ENCODE measurements at regions of chr5 and their contacts with region 1.

Region 1: GRCh38 chr5:170623576-170624181 is 119.9 kb downstream of the KCNIP1 start:
- DNase-seq: peak; percentile 59 to 78
- ATAC-seq: peak; percentile 63 to 93; a peak in 5 of 6 replicates
- H3K4me3 ChIP-seq: no peak overlapping the region
- H3K27ac ChIP-seq: no peak overlapping the region
- H3K4me1 ChIP-seq: no peaks in the 10 kb centered on the region
- CTCF ChIP-seq: peak; percentile 58
- EP300 ChIP-seq: no peak
- POLR2A ChIP-seq: no peak
- RAD21 ChIP-seq: peak; percentile 86 to 95

Region 2: GRCh38 chr5:170267431-170268152 is 356.1 kb before region 1 on chr5:
- CTCF ChIA-PET with region 1: interaction called, 26 read pairs
- POLR2A ChIA-PET with region 1: no interaction called
- DNase-seq: peak; percentile 76 to 79
- ATAC-seq: peak; percentile 94 to 98
- H3K4me3 ChIP-seq: no peak overlapping the region
- H3K27ac ChIP-seq: no peak overlapping the region
- H3K4me1 ChIP-seq: no peaks in the 10 kb centered on the region
- CTCF ChIP-seq: peak; percentile 85
- EP300 ChIP-seq: no peak
- POLR2A ChIP-seq: no peak
- RAD21 ChIP-seq: peak; percentile 61 to 69; a peak in 4 of 5 replicates

Region 3: DNA sequence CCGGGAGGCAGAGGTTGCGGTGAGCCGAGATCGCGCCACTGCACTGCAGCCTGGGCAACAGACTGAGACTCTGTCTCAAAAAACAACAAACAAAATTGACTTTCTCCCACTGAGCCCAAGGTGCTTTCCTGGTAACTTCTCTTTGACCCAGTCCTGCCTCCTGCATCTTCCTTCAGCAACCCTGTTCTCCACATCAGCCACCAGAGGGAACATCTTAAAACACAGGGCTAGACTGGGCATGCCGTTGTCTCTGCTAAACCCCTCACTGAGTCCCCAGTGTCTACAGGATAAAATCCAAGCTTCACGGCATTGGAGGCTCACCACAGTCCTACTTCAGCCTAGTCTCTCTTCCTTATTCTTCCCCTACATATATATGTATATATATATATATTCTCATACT is 194.7 kb before region 1 on chr5:
- CTCF ChIA-PET with region 1: interaction called, 508 read pairs
- POLR2A ChIA-PET with region 1: no interaction called
- DNase-seq: peak; percentile 41 to 50
- ATAC-seq: peak; percentile 71 to 92; a peak in 5 of 6 replicates
- H3K4me3 ChIP-seq: no peak overlapping the region
- H3K27ac ChIP-seq: no peak overlapping the region
- H3K4me1 ChIP-seq: no peaks in the 10 kb centered on the region
- CTCF ChIP-seq: no peak
- EP300 ChIP-seq: no peak
- POLR2A ChIP-seq: no peak
- RAD21 ChIP-seq: peak in 1 of 2 experiments; percentile 33; a peak in 2 of 5 replicates

Region 4: DNA sequence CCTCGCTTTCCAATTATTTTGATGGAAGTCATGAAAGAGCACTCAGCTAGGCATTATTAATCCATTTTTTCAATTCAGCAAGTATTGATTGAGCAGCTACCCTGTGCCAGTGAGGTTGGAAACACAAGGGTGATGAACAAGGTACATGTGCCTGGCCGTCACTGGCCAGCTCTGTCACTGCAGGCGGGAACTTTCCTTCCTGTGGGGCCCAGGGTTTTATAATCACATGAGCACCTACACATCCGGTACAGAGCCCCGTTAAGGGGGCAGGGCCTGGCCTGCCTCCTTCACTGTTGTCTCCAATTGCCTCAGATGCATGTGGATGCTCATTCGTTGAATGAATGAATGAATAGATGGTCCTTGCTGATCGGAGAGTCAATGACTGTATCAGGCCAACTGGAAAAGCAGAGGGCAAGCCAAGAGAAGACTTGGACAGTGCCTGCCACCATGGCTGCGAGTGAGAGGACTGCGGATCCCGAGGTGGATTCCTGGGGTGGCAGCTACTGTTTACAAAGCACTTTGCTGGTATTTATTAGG is 178.6 kb before region 1 on chr5:
- CTCF ChIA-PET with region 1: interaction called, 13 read pairs
- POLR2A ChIA-PET with region 1: no interaction called
- DNase-seq: no peak
- ATAC-seq: no peak
- H3K4me3 ChIP-seq: no peak overlapping the region
- H3K27ac ChIP-seq: no peak overlapping the region
- H3K4me1 ChIP-seq: no peaks in the 10 kb centered on the region
- CTCF ChIP-seq: no peak
- EP300 ChIP-seq: no peak
- POLR2A ChIP-seq: no peak
- RAD21 ChIP-seq: no peak

Region 5: GRCh38 chr5:170597109-170597751 is 26.4 kb before region 1 on chr5:
- CTCF ChIA-PET with region 1: interaction called, 15 read pairs
- POLR2A ChIA-PET with region 1: no interaction called
- DNase-seq: peak in 1 of 2 experiments; percentile 15
- ATAC-seq: peak; percentile 32 to 40; a peak in 2 of 6 replicates
- H3K4me3 ChIP-seq: no peak overlapping the region
- H3K27ac ChIP-seq: no peak overlapping the region
- H3K4me1 ChIP-seq: no peaks in the 10 kb centered on the region
- CTCF ChIP-seq: no peak
- EP300 ChIP-seq: no peak
- POLR2A ChIP-seq: no peak
- RAD21 ChIP-seq: no peak

Region 6: GRCh38 chr5:170638454-170639220 is 15.0 kb after region 1 on chr5:
- CTCF ChIA-PET with region 1: interaction called, 92 read pairs
- POLR2A ChIA-PET with region 1: no interaction called
- DNase-seq: peak; percentile 51 to 82
- ATAC-seq: peak; percentile 83 to 95
- H3K4me3 ChIP-seq: no peak overlapping the region
- H3K27ac ChIP-seq: no peak overlapping the region
- H3K4me1 ChIP-seq: peaks cover 6% of the 10 kb centered on the region
- CTCF ChIP-seq: peak; percentile 87
- EP300 ChIP-seq: no peak
- POLR2A ChIP-seq: no peak
- RAD21 ChIP-seq: peak; percentile 88 to 91

Region 7: DNA sequence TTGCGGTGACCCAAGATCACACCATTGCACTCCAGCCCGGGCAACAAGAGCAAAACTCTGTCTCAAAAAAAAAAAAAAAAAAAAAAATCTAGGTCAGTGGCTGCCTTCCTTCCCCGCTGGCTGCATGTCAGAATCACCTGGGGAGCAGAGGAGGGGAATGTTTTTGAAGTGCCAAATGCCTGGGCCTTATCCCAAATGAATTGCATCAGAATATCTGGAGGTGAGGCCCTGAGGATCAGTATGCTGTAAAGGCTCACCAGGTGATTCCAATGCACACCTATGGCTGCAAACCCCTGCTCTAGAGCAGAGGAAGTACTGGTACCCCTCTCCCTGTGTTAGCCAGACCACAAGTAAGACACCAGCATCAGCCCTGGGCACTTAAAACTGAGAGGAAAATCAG is 115.2 kb after region 1 on chr5:
- CTCF ChIA-PET with region 1: no interaction called
- POLR2A ChIA-PET with region 1: no interaction called
- DNase-seq: no peak
- ATAC-seq: no peak
- H3K4me3 ChIP-seq: no peak overlapping the region
- H3K27ac ChIP-seq: no peak overlapping the region
- H3K4me1 ChIP-seq: peaks cover under 1% of the 10 kb centered on the region; the same call in 2 of the 3 replicates
- CTCF ChIP-seq: no peak
- EP300 ChIP-seq: no peak
- POLR2A ChIP-seq: no peak
- RAD21 ChIP-seq: no peak